Activated T-helper 1 cell treated with anti-CD3 and anti-CD28 coated beads, Interleukin-12 subunit alpha, Interleukin-12 subunit beta, Interleukin-2, Interleukin-4 antibody, amounts not matched to agents 30 ng/mL and 10 ng/mL and 1 ng/mL, durations not matched to agents 14 hours and 24 hours and 36 hours (primary cell): ENCODE measurements at regions of chr1 and their contacts with region 1.

Region 1: DNA sequence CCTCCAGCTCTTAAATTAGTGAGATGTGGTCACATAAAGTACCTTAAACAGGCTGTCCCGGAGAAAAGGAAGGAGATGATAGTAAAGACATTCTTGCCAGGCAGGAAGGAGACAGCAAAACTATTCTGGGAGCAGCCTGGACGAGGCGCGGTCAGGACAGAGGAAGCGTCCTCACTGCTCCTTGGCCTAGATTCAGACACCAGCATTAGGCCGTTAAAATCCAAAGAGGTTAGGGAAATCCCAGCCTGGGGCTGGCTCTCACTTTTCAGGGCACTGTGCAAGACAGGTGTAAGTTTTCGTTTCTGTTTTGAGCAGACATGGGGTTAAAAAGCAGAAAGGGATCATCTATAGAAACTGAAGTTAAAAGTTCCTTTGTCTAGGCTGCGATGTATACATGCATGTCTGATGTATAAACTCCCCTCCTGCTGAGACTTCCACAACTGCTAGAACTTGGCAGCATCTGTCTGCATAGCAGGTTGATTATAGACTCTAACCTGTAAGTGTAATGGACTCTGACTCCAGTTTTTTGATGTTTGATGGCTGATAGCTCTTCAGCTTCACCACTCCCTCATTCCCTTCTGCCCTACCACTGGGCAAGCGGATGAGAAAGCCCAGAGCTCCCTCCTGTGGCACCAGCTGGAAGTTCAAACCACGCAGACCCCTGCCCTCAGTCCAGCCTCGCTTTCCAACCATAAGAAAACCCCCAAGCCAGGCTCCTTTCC is 21.5 kb downstream of the STPG1 start:
- DNase-seq: peak; percentile 47
- H3K4me3 Mint-ChIP-seq: peak overlapping the region; percentile 80
- H3K27ac Mint-ChIP-seq: peak overlapping the region; percentile 79
- H3K4me1 Mint-ChIP-seq: peaks cover 30% of the 10 kb centered on the region
- H3K27me3 Mint-ChIP-seq: peaks cover 4% of the 10 kb centered on the region

Region 2: GRCh38 chr1:24070821-24071393 is 321.1 kb before region 1 on chr1:
- intact Hi-C with region 1: loop called (anchors 1 kb)
- DNase-seq: peak; percentile 55
- H3K4me3 Mint-ChIP-seq: no peak overlapping the region
- H3K27ac Mint-ChIP-seq: no peak overlapping the region
- H3K4me1 Mint-ChIP-seq: no peaks in the 10 kb centered on the region
- H3K27me3 Mint-ChIP-seq: peaks cover 9% of the 10 kb centered on the region

Region 3: GRCh38 chr1:24150234-24151174 is 241.5 kb before region 1 on chr1:
- intact Hi-C with region 1: loop called (anchors 1 kb)
- DNase-seq: peak; percentile 77
- H3K4me3 Mint-ChIP-seq: peak overlapping the region; percentile 65
- H3K27ac Mint-ChIP-seq: no peak overlapping the region
- H3K4me1 Mint-ChIP-seq: peaks cover 18% of the 10 kb centered on the region
- H3K27me3 Mint-ChIP-seq: peaks cover 35% of the 10 kb centered on the region

Region 4: DNA sequence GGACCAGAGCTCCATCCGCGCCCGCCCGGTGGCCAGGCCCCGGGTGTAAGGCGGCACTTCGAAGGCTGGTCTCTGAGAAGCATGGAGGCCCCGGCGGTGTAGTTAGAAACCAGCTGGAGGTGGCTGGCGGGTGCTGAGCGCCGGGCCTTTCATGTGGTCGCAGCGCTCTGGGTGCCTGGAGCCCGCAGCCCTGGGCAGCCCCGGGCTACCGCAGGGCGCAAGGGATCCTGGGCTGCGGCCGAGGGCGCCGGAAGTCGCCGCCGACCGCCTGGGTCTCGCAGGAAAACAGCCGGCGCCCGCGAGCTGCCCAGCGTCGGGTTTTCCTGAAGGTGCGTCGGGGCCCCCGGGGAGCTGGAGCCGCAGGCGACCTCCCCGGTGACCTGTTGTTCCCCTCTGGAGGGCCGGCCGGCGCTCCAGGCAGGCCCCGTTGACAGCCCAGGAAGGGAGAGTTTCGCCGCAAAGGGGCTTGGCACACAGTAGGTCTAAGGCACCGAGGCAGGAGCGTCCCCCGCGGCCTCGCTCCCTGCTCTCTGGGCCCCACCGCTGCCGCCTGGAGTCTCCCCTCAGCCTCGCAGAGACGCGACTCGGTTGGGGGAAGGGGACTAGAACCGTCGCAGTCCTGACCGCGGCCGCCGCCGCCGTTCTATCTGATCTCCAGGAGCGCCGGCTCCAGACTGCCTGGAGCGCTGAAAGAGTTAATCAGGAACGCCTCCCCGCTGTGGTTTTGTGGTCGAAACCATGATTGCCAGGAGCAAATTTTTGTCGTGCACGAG is 70.2 kb before region 1 on chr1:
- intact Hi-C with region 1: loop called (anchors 1 kb)
- DNase-seq: peak; percentile 71
- H3K4me3 Mint-ChIP-seq: peak overlapping the region; percentile 65
- H3K27ac Mint-ChIP-seq: peak overlapping the region; percentile 71
- H3K4me1 Mint-ChIP-seq: peaks cover 48% of the 10 kb centered on the region
- H3K27me3 Mint-ChIP-seq: peaks cover 94% of the 10 kb centered on the region

Region 5: DNA sequence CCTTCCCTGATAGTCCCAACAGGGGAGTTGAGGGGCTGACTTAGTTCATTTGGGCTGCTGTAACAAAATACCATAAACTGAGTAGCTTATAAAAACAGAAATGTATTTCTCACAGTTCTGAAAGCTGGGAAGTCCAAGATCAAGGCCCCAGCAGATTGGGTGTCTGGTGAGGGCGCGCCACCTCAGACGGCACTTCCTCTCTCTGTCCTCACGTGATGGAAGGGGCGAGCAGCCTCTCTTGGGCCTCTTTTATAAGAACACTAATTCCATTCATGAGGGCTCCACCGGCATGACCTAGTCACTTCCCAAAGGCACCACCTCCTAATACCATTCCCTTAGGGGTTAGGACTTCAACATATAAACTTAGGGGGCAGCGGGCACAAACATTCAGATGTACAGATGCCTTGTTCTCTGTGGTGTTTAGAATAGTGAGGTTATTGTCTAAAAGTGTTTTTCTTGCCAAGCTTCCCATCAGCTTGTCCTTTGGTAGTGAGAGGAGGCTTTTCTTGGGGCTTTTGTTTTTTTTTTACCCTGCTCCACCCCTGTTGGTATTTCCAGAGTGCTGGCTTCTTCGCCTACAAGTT is 43.8 kb after region 1 on chr1:
- intact Hi-C with region 1: no loop called
- DNase-seq: no peak
- H3K4me3 Mint-ChIP-seq: no peak overlapping the region
- H3K27ac Mint-ChIP-seq: no peak overlapping the region
- H3K4me1 Mint-ChIP-seq: no peaks in the 10 kb centered on the region
- H3K27me3 Mint-ChIP-seq: no peaks in the 10 kb centered on the region

Region 6: DNA sequence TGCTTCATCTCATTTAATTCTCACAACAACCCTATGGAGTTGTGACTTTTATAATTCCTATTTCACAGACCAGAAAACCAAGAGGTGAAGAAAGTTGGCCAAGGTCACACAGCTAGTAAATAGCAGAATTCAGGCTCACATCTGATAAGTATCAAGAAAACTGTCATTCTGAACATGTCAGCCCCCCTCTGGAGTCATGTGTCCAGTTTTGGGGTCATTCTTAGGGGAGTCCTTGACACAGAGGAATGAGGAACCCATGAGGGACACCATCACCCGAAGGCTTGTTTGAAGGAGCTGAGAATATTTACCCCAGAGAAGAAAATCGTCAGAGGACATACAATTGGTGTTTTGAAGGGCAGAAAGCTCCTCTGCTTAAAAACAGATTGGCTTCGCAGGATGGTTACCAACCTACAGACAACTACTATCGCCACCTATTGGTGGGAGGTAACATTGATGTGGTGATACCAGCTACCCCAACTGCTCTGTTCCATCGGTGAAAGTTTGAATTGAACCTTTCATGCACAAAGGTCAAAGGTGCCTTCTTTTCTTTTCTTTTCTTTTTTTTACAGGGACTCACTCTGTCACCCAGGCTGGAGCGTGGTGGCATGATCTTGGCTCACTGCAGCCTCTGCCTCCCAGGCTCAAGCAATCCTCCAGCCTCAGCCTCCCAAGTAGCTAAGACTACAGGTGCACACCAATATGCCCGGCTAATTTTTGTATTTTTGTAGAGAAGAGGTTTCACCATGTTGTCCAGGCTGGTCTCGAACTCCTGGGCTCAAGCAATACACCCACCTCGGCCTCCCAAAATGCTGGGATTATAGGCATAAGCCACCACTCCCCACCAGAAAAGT is 195.2 kb after region 1 on chr1:
- intact Hi-C with region 1: loop called (anchors 1 kb)
- DNase-seq: peak; percentile 53
- H3K4me3 Mint-ChIP-seq: no peak overlapping the region
- H3K27ac Mint-ChIP-seq: no peak overlapping the region
- H3K4me1 Mint-ChIP-seq: peaks cover 9% of the 10 kb centered on the region
- H3K27me3 Mint-ChIP-seq: peaks cover 17% of the 10 kb centered on the region

Region 7: GRCh38 chr1:24601023-24601527 is 209.0 kb after region 1 on chr1:
- intact Hi-C with region 1: no loop called
- DNase-seq: no peak
- H3K4me3 Mint-ChIP-seq: no peak overlapping the region
- H3K27ac Mint-ChIP-seq: no peak overlapping the region
- H3K4me1 Mint-ChIP-seq: no peaks in the 10 kb centered on the region
- H3K27me3 Mint-ChIP-seq: peaks cover 9% of the 10 kb centered on the region

Region 8: GRCh38 chr1:24635195-24635843 is 243.3 kb after region 1 on chr1:
- intact Hi-C with region 1: loop called (anchors 2 kb)
- DNase-seq: no peak
- H3K4me3 Mint-ChIP-seq: no peak overlapping the region
- H3K27ac Mint-ChIP-seq: no peak overlapping the region
- H3K4me1 Mint-ChIP-seq: no peaks in the 10 kb centered on the region
- H3K27me3 Mint-ChIP-seq: peaks cover 15% of the 10 kb centered on the region

Region 9: GRCh38 chr1:24727501-24728216 is 335.6 kb after region 1 on chr1:
- intact Hi-C with region 1: no loop called
- DNase-seq: no peak
- H3K4me3 Mint-ChIP-seq: no peak overlapping the region
- H3K27ac Mint-ChIP-seq: no peak overlapping the region
- H3K4me1 Mint-ChIP-seq: peaks cover 10% of the 10 kb centered on the region
- H3K27me3 Mint-ChIP-seq: peaks cover 2% of the 10 kb centered on the region